ENCODE measurements at regions of chr9 and their contacts with region 1.

Region 1: GRCh38 chr9:132901856-132902831 is 23.4 kb downstream of the SPACA9 start:
- DNase-seq: peak; percentile 84
- H3K4me3 ChIP-seq: no peak overlapping the region; a peak in 1 of 4 replicates
- H3K27ac ChIP-seq: peak overlapping the region in 1 of 2 experiments; percentile 26; a peak in 2 of 4 replicates
- H3K4me1 ChIP-seq: peaks cover 0 to 7% of the 10 kb centered on the region in 2 experiments; a peak in 1 of 4 replicates
- H3K27me3 ChIP-seq: no peaks in the 10 kb centered on the region
- CTCF ChIP-seq: peak; percentile 97
- EP300 ChIP-seq: no peak
- RAD21 ChIP-seq: peak; percentile 87

Region 2: GRCh38 chr9:132806723-132807421 is 95.3 kb before region 1 on chr9:
- CTCF ChIA-PET with region 1: interaction called, 50 read pairs
- POLR2A ChIA-PET with region 1: no interaction called
- DNase-seq: no peak
- H3K4me3 ChIP-seq: no peak overlapping the region
- H3K27ac ChIP-seq: no peak overlapping the region
- H3K4me1 ChIP-seq: peaks cover 0 to 3% of the 10 kb centered on the region in 2 experiments; a peak in 1 of 4 replicates
- H3K27me3 ChIP-seq: no peaks in the 10 kb centered on the region; the same call in 1 of the 2 replicates
- CTCF ChIP-seq: no peak
- EP300 ChIP-seq: no peak
- RAD21 ChIP-seq: no peak

Region 3: DNA sequence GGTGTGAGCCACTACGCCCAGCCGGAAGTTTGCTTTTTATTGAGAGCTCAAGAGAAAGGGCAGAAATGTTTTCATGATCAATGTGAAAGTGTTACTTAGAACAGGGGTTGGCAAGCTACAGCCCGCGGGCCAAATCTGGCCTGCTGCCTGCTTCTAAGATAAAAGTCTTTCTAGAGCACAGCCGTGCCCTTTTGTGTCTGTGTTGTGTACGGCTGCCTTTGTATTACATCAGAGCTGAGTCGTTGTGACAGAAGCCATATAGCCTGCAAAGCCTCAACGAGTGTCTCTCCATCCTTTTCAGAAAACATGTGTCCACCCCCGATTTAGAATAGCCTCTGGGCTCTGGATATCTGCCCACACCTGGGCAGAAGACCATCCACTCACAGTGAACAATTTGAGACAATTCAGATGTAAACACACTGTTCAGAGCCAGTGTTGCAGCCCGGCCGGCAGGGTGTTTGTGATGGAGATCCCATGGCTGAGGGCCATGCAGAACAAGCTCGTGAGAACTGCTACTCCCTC is 52.9 kb before region 1 on chr9:
- CTCF ChIA-PET with region 1: interaction called, 18 read pairs
- POLR2A ChIA-PET with region 1: no interaction called
- DNase-seq: peak; percentile 81
- H3K4me3 ChIP-seq: no peak overlapping the region
- H3K27ac ChIP-seq: peak overlapping the region in 1 of 2 experiments; percentile 88; a peak in 2 of 4 replicates
- H3K4me1 ChIP-seq: peaks cover 0 to 40% of the 10 kb centered on the region in 2 experiments; a peak in 1 of 4 replicates
- H3K27me3 ChIP-seq: no peaks in the 10 kb centered on the region
- CTCF ChIP-seq: no peak
- EP300 ChIP-seq: peak in 1 of 2 experiments; percentile 94; a peak in 2 of 4 replicates
- RAD21 ChIP-seq: peak; percentile 11; the same call in 1 of the 2 replicates

Region 4: GRCh38 chr9:132877824-132878694 is 24.1 kb before region 1 on chr9 and contains the start of gene AK8:
- CTCF ChIA-PET with region 1: interaction called, 26 read pairs
- POLR2A ChIA-PET with region 1: interaction called, 3 read pairs
- DNase-seq: peak; percentile 98
- H3K4me3 ChIP-seq: peak within 1 kb of the TSS; percentile 98
- H3K27ac ChIP-seq: peak within 1 kb of the TSS; percentile 81 to 86
- H3K4me1 ChIP-seq: peaks cover 0 to 7% of the 10 kb centered on the region in 2 experiments; a peak in 1 of 4 replicates
- H3K27me3 ChIP-seq: no peaks in the 10 kb centered on the region
- CTCF ChIP-seq: no peak
- EP300 ChIP-seq: no peak
- RAD21 ChIP-seq: no peak
- polyA plus RNA-seq, gene AK8: 0.77 and 0.84 TPM in 2 replicates

Region 5: DNA sequence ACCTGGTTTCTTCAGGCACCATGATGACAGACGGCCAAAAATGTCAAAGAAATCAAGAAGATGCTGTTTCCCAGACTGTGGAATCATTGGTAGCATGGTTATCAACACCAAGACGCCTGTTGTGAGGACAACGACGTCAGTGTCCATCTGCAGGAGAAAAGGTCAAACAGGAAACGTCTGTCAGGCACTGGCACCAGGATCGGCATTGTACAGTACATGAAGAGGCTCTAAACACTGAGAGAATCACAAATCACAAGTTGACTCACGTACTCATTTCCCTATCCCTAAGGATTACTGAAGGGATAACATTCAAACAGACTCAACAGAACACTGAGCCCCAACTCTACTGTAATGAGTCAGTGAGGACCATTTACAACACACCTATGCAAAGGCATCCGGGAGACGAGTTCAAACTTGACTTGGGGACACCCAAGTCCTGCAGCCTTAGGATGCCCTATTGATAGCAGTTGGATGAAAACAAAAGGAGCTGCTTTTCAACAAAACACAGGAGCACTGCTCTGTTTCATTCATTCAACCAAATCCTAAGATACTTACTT is 21.3 kb after region 1 on chr9:
- CTCF ChIA-PET with region 1: interaction called, 85 read pairs
- POLR2A ChIA-PET with region 1: interaction called, 3 read pairs
- DNase-seq: no peak
- H3K4me3 ChIP-seq: no peak overlapping the region
- H3K27ac ChIP-seq: no peak overlapping the region
- H3K4me1 ChIP-seq: no peaks in the 10 kb centered on the region
- H3K27me3 ChIP-seq: no peaks in the 10 kb centered on the region
- CTCF ChIP-seq: no peak
- EP300 ChIP-seq: no peak
- RAD21 ChIP-seq: no peak

Region 6: GRCh38 chr9:132978451-132979131 is 76.4 kb after region 1 on chr9 and contains the start of gene GFI1B:
- CTCF ChIA-PET with region 1: interaction called, 10 read pairs
- POLR2A ChIA-PET with region 1: no interaction called
- DNase-seq: peak; percentile 16
- H3K4me3 ChIP-seq: no peak within 1 kb of the TSS; a peak in 2 of 4 replicates
- H3K27ac ChIP-seq: no peak within 1 kb of the TSS
- H3K4me1 ChIP-seq: peaks cover 0 to 7% of the 10 kb centered on the region in 2 experiments; a peak in 1 of 4 replicates
- H3K27me3 ChIP-seq: peaks cover 70% of the 10 kb centered on the region
- CTCF ChIP-seq: no peak
- EP300 ChIP-seq: no peak
- RAD21 ChIP-seq: no peak
- polyA plus RNA-seq, gene GFI1B: 0.03 TPM in 1 of 2 replicates, not detected in the other

Measured in SK-N-SH (cell line).